ENCODE measurements at regions of chr1 and their contacts with region 1.

Region 1: DNA sequence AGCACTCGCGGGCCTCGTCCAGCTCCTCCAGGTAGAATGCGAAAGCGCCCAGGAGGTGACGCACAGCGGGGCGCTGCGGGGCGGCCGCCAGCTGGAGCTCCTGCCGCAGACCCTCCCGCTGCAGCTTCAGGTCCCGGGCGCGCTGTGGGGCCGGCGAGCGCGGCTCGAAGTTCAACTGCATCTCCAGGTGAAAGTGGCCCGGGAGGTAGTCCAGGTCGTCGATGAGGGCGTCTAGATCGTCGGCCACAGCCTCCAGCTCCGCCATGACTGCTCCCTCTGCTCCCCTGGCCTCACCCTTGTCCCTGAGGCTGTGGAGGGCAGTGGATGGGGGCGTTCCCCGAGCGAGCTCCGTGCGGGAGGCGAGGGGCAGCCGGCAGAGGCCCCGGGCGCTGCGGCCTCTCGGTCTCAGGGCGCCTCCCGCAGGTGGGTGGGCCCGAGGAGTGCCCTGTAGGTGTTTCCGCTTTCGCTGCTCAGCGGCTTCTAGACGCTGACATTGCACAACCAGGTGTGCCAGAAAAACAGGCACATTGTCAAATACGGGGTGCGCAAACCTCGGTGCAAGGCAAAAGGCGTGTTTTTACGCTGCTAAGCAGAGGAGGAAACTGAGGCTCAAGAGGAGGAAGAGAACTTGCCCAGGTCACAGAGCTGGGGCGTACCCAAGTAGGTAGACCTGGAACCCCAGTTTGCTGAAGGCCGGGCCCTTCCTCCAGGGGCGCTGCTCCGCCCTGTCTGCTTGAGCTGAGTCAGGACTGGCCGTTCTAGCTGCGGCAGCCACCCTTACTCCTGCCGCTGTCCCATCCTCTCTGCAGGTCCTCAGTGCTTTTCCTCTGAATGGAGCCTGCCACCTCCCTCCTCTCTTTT is at the start of gene TTC22:
- DNase-seq: peak; percentile 67
- ATAC-seq: peak; percentile 90
- H3K4me3 Mint-ChIP-seq: peak within 1 kb of the TSS; percentile 90
- H3K27ac Mint-ChIP-seq: peak within 1 kb of the TSS; percentile 83
- H3K4me1 Mint-ChIP-seq: peaks cover 29% of the 10 kb centered on the region
- H3K27me3 Mint-ChIP-seq: no peaks in the 10 kb centered on the region
- CTCF ChIP-seq: no peak
- total RNA-seq, gene TTC22: 4.9 and 6.0 TPM in 2 replicates

Region 2: GRCh38 chr1:54886724-54887664 is 85.9 kb after region 1 on chr1 and contains the start of gene DHCR24:
- CTCF ChIA-PET with region 1: interaction called, 5 read pairs
- POLR2A ChIA-PET with region 1: interaction called, 3 read pairs
- intact Hi-C with region 1: loop called (anchors 2 kb)
- DNase-seq: peak; percentile 71
- ATAC-seq: peak; percentile 95
- H3K4me3 Mint-ChIP-seq: peak within 1 kb of the TSS; percentile 91
- H3K27ac Mint-ChIP-seq: peak within 1 kb of the TSS; percentile 54
- H3K4me1 Mint-ChIP-seq: peaks cover 23% of the 10 kb centered on the region
- H3K27me3 Mint-ChIP-seq: peaks cover 6% of the 10 kb centered on the region
- CTCF ChIP-seq: no peak
- total RNA-seq, gene DHCR24: 49.0 and 55.0 TPM in 2 replicates

Measured in activated B cell treated with CpG ODN at 0.5 μM for 24 hours (primary cell).